GM18951 (cell line): ENCODE measurements at regions of chr6 and their contacts with region 1.

Region 1: DNA sequence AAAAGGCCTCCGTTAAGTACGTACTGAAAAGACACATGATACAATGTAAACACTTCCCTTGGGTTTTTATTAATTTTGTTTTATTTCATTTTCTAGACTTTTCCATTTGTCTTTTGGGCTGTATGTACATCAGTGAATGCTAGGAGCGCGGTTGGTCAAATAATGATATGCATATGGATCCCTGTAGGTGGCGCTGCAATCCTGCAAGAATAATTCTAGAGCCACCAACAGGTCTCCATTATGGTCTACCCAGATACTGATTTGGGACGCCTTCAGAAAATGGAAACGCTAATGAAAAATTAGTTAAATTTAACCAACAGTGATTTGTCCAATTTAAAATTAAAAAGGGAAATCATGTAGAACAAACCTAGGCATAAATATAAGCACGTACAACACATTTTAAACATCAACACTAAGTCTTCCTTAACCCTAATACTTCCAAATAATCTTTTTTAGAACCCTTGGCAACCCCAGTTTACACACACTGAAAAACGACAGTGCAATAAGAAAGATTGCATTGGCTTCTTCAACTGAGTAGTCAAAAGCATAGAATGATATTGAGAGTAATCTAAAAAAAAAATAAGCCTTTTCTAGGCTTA is 433.5 kb downstream of the RFPL4B start:
- POLR2A ChIP-seq: no peak

Region 2: GRCh38 chr6:113018351-113019151 is 238.0 kb after region 1 on chr6:
- in situ Hi-C with region 1: no loop called
- POLR2A ChIP-seq: no peak

Region 3: DNA sequence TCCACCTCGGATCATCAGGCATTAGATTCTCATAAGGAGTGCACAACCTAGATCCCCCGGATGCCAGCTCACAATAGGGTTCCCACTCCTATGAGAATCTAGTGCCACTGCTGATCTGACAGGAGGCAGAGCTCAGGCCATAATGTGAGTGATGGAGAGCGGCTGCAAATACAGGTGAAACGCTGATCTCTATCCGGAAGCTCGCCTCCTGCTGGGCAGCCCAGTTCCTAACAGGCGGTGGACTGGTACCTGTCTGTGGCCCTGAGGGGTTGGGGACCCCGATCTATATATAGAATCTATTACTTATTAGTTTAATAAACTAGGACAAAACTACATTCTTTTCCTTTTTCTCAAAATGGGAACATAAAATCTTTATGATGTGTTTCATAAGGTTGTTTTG is 308.5 kb after region 1 on chr6:
- in situ Hi-C with region 1: no loop called
- POLR2A ChIP-seq: no peak

Region 4: GRCh38 chr6:113909234-113909856 is 1128.7 kb after region 1 on chr6:
- in situ Hi-C with region 1: loop called (anchors 25 kb)
- POLR2A ChIP-seq: no peak